MCF 10A (cell line): ENCODE measurements at regions of chr17 and their contacts with region 1.

Region 1: DNA sequence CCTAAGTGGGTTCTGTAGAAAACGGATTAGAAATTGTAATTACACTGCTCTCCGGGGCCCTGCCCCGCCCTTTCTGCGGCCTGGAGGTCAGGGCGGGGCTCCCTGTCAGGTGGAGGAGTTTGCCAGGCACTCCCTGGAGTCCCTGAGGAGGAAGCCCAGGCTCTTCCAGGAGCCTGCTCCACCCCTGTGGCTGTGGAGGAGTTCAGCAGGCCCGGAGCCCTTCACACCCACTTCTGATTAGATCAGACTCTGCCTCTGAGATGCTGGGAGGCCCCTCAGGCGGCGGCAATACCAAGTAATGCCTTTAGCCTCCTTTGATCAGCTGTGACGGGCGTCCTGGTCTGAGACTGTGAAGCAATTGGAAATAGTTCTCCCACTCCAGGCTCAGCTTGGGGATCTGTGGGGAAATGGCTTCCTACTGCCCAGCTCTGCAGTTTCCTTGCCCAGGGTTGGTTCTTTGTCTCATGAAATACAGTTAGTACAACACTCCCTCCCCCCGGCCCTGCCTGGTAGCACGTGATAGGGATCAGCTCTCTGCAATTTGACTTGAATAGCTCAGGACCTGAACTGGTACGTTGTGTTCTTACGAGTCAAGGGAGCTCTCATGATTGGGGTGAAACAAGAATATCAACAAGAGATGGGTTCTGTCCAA is 22.3 kb downstream of the BAIAP2 start:
- DNase-seq: peak; percentile 77
- H3K4me3 Mint-ChIP-seq: peak overlapping the region; percentile 67
- H3K27ac Mint-ChIP-seq: peak overlapping the region; percentile 94
- H3K4me1 Mint-ChIP-seq: peaks cover 22% of the 10 kb centered on the region
- H3K27me3 Mint-ChIP-seq: no peaks in the 10 kb centered on the region
- CTCF ChIP-seq: no peak

Region 2: DNA sequence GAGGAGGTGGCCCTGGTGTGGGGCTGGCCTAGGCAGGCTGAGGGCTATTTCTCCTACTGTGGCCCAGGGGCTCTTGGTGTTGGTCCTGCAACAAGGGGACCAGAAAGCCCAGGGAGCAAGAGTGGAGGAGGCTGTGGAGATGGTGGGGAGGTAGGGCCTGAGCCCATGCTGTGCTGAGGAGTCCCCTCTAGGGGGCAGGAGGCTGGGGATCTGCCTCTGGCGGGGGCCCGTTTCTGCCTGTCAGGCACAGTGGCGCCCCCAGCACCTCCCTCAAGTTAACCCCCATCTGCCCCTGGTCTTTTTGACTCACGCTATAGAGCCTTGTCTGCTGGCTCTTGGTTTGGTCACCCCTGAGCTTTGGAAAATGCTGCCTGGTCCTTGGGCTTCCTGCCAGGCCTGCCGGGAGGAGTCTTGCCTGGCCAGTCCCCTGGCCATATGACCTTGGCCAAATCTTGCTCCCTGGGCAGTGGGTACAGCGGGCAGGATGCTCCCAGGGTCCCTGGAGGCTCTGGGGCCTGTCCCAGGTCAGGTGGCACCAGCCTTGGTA is 16.3 kb before region 1 on chr17:
- CTCF ChIA-PET with region 1: interaction called, 8 read pairs
- POLR2A ChIA-PET with region 1: interaction called, 60 read pairs
- intact Hi-C with region 1: loop called (anchors 1 kb)
- DNase-seq: peak; percentile 22
- H3K4me3 Mint-ChIP-seq: peak overlapping the region; percentile 59
- H3K27ac Mint-ChIP-seq: peak overlapping the region; percentile 69
- H3K4me1 Mint-ChIP-seq: peaks cover 63% of the 10 kb centered on the region
- H3K27me3 Mint-ChIP-seq: no peaks in the 10 kb centered on the region
- CTCF ChIP-seq: peak; percentile 39